Cardiac septum (tissue), 1 donor: ENCODE measurements at regions of chr9 and their contacts with region 1.

Region 1: GRCh38 chr9:69324549-69325401 is at the start of gene ENTREP1:
- DNase-seq: peak; percentile 84
- total RNA-seq, gene ENTREP1: 25.1 TPM

Region 2: GRCh38 chr9:69376651-69377050 is 51.9 kb after region 1 on chr9:
- intact Hi-C with region 1: loop called (anchors 2 kb)
- DNase-seq: no peak

Region 3: GRCh38 chr9:69391946-69392345 is 67.2 kb after region 1 on chr9:
- intact Hi-C with region 1: loop called (anchors 1 kb)
- DNase-seq: no peak

Region 4: GRCh38 chr9:69549310-69550202 is 224.8 kb after region 1 on chr9:
- intact Hi-C with region 1: no loop called
- DNase-seq: no peak